ENCODE measurements at regions of chr11 and their contacts with region 1.

Region 1: DNA sequence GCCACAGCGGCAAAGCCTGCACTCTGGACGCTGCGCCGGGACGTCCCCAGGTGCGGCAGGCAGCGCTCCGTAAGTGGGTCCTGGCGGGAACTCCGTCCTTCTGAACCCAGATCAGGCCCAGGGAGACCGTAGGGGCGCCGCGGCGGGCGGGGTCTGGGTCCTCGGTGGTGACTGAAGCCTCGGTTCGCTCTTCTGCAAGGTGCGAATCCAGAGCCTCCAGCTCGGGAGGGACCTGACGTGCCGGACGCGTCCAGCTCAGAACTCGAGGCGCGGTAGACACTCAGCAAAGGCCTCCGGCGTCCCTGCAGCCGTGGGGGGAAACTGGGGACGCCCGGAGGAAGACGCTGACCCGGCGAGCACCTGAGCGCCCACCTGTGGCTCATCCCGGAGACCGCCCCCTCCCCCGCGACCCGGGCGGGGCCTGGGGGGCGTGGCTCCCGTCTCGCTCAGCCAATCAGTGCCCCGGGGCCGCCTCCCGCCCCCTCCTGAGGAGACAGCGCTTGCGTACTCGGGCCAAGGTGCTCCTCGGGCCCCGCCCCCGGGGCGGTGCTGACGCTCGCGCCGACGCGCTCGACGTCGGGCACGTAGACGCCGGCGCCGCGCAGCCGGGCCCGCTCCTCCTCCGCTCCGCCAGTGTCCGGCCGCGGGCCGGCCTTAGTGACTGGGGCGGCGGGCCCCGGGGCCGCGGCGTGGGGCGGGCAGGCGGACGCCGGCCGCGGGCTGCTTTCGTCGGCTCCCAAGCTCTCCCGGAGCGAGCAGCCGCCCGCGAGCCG is at the start of gene PPFIA1:
- DNase-seq: peak; percentile 93 to 99 (median 96)
- ATAC-seq: peak; percentile 99
- H3K4me3 ChIP-seq: peak within 1 kb of the TSS; percentile 95
- H3K4me3 Mint-ChIP-seq: peak within 1 kb of the TSS; percentile 89 to 94 (median 92)
- H3K27ac ChIP-seq: peak within 1 kb of the TSS; percentile 83
- H3K27ac Mint-ChIP-seq: peak within 1 kb of the TSS; percentile 63 to 96 (median 88)
- H3K4me1 ChIP-seq: peaks cover 4 to 21% of the 10 kb centered on the region in 2 donors
- H3K4me1 Mint-ChIP-seq: peaks cover 13 to 52% (median 42%) of the 10 kb centered on the region in 7 donors
- H3K27me3 ChIP-seq: no peaks in the 10 kb centered on the region
- H3K27me3 Mint-ChIP-seq: peaks cover 8 to 31% (median 14%) of the 10 kb centered on the region in 5 donors
- total RNA-seq, gene PPFIA1: 41.5 to 71.0 (median 52.3) TPM

Region 2: DNA sequence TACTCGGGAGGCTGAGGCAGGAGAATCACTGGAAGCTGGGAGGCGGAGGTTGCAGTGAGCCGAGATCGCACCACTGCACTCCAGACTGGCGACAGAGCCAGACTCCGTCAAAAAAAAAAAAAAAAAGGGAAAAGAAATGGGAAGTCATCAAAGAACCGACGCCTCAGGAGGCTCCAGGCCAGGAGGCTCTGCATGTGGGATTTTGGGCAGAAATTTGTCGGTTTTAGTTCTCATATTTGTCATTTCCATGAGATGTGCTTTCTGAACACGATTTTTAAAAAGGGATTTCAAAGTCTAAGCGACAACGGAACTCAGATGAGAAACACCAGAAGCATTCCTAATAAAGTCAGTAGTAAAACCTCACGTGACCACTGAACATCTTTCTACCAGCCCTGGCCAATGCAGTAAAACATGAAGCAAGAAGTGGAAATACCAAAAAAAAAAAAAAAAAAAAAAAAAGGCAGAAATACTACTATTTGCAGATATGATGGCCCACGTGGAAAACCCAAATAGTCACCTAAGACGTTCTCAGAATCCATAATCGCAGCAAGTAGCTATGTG is 594.4 kb before region 1 on chr11:
- CTCF ChIA-PET with region 1: no interaction called
- POLR2A ChIA-PET with region 1: interaction called, 3 read pairs
- intact Hi-C with region 1: loop called in 1 of 2 experiments (anchors 1 kb)
- DNase-seq: no peak
- ATAC-seq: no peak
- H3K4me3 ChIP-seq: peak overlapping the region; percentile 75
- H3K4me3 Mint-ChIP-seq: peak overlapping the region; percentile 91 to 97 (median 94)
- H3K27ac ChIP-seq: peak overlapping the region; percentile 85
- H3K27ac Mint-ChIP-seq: peak overlapping the region in 3 of 9 donors; percentile 90 to 95 (median 92)
- H3K4me1 ChIP-seq: peaks cover 15 to 19% of the 10 kb centered on the region in 2 donors
- H3K4me1 Mint-ChIP-seq: peaks cover 16 to 37% (median 25%) of the 10 kb centered on the region in 7 donors
- H3K27me3 ChIP-seq: no peaks in the 10 kb centered on the region
- H3K27me3 Mint-ChIP-seq: peaks cover 0 to 13% (median 0%) of the 10 kb centered on the region in 5 donors

Region 3: GRCh38 chr11:70048279-70049027 is 221.8 kb before region 1 on chr11:
- CTCF ChIA-PET with region 1: no interaction called
- POLR2A ChIA-PET with region 1: no interaction called
- intact Hi-C with region 1: no loop called
- DNase-seq: no peak
- ATAC-seq: no peak
- H3K4me3 ChIP-seq: no peak overlapping the region
- H3K4me3 Mint-ChIP-seq: no peak overlapping the region
- H3K27ac ChIP-seq: no peak overlapping the region
- H3K27ac Mint-ChIP-seq: no peak overlapping the region
- H3K4me1 ChIP-seq: no peaks in the 10 kb centered on the region
- H3K4me1 Mint-ChIP-seq: no peaks in the 10 kb centered on the region
- H3K27me3 ChIP-seq: no peaks in the 10 kb centered on the region
- H3K27me3 Mint-ChIP-seq: peaks cover 15 to 47% (median 40%) of the 10 kb centered on the region in 5 donors

Region 4: GRCh38 chr11:70191495-70192140 is 78.7 kb before region 1 on chr11:
- CTCF ChIA-PET with region 1: no interaction called
- POLR2A ChIA-PET with region 1: no interaction called
- intact Hi-C with region 1: no loop called
- DNase-seq: peak in 6 of 9 donors; percentile 11 to 68 (median 29)
- ATAC-seq: peak; percentile 62
- H3K4me3 ChIP-seq: no peak overlapping the region
- H3K4me3 Mint-ChIP-seq: no peak overlapping the region
- H3K27ac ChIP-seq: no peak overlapping the region
- H3K27ac Mint-ChIP-seq: no peak overlapping the region
- H3K4me1 ChIP-seq: no peaks in the 10 kb centered on the region
- H3K4me1 Mint-ChIP-seq: peaks cover 0 to 6% (median 0%) of the 10 kb centered on the region in 7 donors
- H3K27me3 ChIP-seq: no peaks in the 10 kb centered on the region
- H3K27me3 Mint-ChIP-seq: peaks cover 0 to 12% (median 8%) of the 10 kb centered on the region in 5 donors

Region 5: DNA sequence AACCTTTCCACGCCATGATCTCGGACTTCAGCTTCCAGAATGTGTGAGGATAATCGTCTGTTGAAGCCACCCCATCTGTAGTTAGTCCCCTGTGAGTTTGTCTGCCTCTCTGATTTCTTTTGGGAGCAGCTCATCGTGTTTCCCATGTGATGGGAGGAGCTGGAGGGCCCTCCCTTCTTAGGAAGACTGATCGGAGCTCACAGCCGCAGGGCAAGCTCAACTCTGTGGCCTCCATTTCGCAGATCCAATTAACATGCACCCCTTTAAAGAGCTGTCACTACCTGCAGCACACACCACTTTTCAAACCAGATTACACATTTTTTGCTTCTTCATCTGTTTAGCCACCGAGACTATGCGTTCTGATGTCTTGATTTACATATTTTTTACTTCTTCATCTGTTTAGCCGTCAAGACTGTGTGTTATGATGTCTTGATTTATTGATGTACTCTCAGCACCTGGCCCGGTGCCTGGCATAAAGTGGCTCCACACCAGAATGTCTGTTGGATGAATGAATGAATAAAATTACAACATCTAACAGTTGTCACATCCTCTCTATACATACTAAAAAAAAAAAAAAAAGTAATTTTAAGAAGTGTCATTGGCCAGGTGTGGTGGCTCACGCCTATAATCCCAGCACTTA is 14.7 kb before region 1 on chr11:
- CTCF ChIA-PET with region 1: no interaction called
- POLR2A ChIA-PET with region 1: no interaction called
- intact Hi-C with region 1: no loop called
- DNase-seq: no peak
- ATAC-seq: no peak
- H3K4me3 ChIP-seq: no peak overlapping the region
- H3K4me3 Mint-ChIP-seq: no peak overlapping the region
- H3K27ac ChIP-seq: no peak overlapping the region
- H3K27ac Mint-ChIP-seq: no peak overlapping the region
- H3K4me1 ChIP-seq: no peaks in the 10 kb centered on the region
- H3K4me1 Mint-ChIP-seq: peaks cover 0 to 4% (median 0%) of the 10 kb centered on the region in 7 donors
- H3K27me3 ChIP-seq: no peaks in the 10 kb centered on the region
- H3K27me3 Mint-ChIP-seq: peaks cover 0 to 6% (median 0%) of the 10 kb centered on the region in 5 donors

Region 6: GRCh38 chr11:70397983-70398833 is 127.9 kb after region 1 on chr11 and contains the start of gene CTTN:
- CTCF ChIA-PET with region 1: no interaction called
- POLR2A ChIA-PET with region 1: no interaction called
- intact Hi-C with region 1: loop called in 1 of 2 experiments (anchors 10 kb)
- DNase-seq: peak; percentile 26 to 78 (median 47)
- ATAC-seq: peak; percentile 77
- H3K4me3 ChIP-seq: peak within 1 kb of the TSS; percentile 36
- H3K4me3 Mint-ChIP-seq: peak within 1 kb of the TSS; percentile 76 to 97 (median 92)
- H3K27ac ChIP-seq: peak within 1 kb of the TSS; percentile 54
- H3K27ac Mint-ChIP-seq: peak within 1 kb of the TSS in 7 of 9 donors; percentile 24 to 90 (median 65)
- H3K4me1 ChIP-seq: peaks cover 9% of the 10 kb centered on the region in 2 donors
- H3K4me1 Mint-ChIP-seq: peaks cover 11 to 25% (median 12%) of the 10 kb centered on the region in 7 donors
- H3K27me3 ChIP-seq: no peaks in the 10 kb centered on the region
- H3K27me3 Mint-ChIP-seq: peaks cover 18 to 79% (median 31%) of the 10 kb centered on the region in 5 donors
- total RNA-seq, gene CTTN: 1.3 to 2.6 (median 2.2) TPM

Measured in naive thymus-derived CD4-positive, alpha-beta T cell (primary cell).